Activated CD4-positive, alpha-beta memory T cell treated with anti-CD3 and anti-CD28 coated beads, Interleukin-2, amount 10 ng/mL, durations not matched to agents 7 days and 5 days (primary cell): ENCODE measurements at regions of chr19 and their contacts with region 1.

Region 1: DNA sequence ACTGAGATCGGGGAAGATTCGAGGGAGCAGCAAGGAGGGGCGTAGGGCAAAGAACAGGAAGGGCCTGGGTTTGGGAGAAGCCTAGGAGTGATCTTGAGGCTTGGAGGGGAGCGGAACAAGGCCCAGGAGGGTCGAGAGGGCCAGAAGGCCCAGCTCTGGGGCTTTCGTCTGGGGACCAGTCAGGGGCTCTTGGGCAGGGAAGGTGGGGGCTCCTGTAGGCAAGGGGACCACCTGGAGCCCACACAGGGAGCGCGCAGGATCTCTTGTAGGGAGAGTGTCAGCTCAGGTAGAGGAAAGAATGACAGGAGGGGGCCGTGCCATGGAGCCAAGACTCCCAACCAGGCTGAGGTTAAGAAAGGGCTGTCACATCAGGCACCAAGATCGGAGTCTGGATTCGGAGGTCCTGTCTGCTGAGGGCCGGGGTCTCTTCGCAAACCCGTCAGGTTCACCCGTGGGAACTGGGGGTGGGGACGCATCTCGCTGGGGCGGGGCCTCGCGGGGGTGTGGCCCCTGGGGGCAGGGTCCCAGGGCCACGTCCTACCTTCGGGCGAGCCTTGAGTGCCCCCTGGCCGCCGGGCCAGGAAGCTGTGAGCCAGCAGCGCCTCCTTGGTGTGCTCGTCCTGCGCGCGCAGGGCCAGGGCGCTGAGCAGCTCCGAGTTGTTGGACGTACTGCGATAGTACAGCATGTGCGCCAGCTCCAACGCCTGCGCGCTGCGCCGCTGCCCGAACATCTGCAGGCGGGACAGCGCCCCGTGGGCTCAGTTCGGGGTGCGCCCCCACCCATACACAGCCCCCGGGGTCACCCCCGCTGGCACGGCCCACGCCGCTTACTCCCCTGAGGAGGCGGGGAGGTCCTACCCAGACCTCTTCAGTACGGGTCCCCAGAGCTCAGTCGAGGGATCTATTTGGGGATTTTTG is 8.4 kb downstream of the EMP3 start:
- DNase-seq: peak; percentile 95
- H3K4me3 Mint-ChIP-seq: peak overlapping the region; percentile 96
- H3K27ac Mint-ChIP-seq: peak overlapping the region; percentile 95
- H3K4me1 Mint-ChIP-seq: peaks cover 53% of the 10 kb centered on the region
- H3K27me3 Mint-ChIP-seq: no peaks in the 10 kb centered on the region

Region 2: GRCh38 chr19:48255376-48256303 is 78.1 kb before region 1 on chr19 and contains the start of gene CARD8:
- CTCF ChIA-PET with region 1: interaction called, 25 read pairs
- POLR2A ChIA-PET with region 1: interaction called, 7 read pairs
- DNase-seq: peak; percentile 86
- H3K4me3 Mint-ChIP-seq: peak within 1 kb of the TSS; percentile 98
- H3K27ac Mint-ChIP-seq: peak within 1 kb of the TSS; percentile 95
- H3K4me1 Mint-ChIP-seq: peaks cover 68% of the 10 kb centered on the region
- H3K27me3 Mint-ChIP-seq: no peaks in the 10 kb centered on the region
- total RNA-seq, gene CARD8: 247 to 253 TPM

Region 3: GRCh38 chr19:48315712-48316111 is 18.0 kb before region 1 on chr19:
- CTCF ChIA-PET with region 1: interaction called, 342 read pairs
- POLR2A ChIA-PET with region 1: interaction called, 265 read pairs
- DNase-seq: no peak
- H3K4me3 Mint-ChIP-seq: no peak overlapping the region
- H3K27ac Mint-ChIP-seq: no peak overlapping the region
- H3K4me1 Mint-ChIP-seq: peaks cover 12% of the 10 kb centered on the region
- H3K27me3 Mint-ChIP-seq: no peaks in the 10 kb centered on the region

Region 4: DNA sequence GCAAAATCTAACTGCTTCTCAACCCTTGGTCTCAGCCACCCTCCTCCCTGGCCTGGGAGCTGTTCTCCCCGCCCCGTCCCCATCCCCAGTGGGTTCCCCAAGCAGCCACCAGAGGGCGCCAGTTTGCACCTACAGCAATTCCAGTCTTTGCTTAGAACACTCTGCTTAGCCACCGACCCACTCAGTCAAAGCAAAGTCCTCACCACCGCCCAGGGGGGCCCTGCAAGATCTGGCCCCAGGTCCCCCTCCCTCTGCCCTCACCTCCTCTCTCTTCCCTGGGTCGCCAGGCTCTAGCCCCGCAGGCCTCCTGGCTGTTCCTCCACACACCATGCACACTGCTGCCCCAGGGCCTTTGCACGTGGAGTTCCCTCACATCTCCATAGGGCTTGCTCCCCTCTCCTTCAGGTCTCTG is 17.6 kb after region 1 on chr19:
- CTCF ChIA-PET with region 1: interaction called, 19 read pairs
- POLR2A ChIA-PET with region 1: no interaction called
- DNase-seq: peak; percentile 86
- H3K4me3 Mint-ChIP-seq: no peak overlapping the region
- H3K27ac Mint-ChIP-seq: no peak overlapping the region
- H3K4me1 Mint-ChIP-seq: peaks cover 5% of the 10 kb centered on the region
- H3K27me3 Mint-ChIP-seq: no peaks in the 10 kb centered on the region

Region 5: DNA sequence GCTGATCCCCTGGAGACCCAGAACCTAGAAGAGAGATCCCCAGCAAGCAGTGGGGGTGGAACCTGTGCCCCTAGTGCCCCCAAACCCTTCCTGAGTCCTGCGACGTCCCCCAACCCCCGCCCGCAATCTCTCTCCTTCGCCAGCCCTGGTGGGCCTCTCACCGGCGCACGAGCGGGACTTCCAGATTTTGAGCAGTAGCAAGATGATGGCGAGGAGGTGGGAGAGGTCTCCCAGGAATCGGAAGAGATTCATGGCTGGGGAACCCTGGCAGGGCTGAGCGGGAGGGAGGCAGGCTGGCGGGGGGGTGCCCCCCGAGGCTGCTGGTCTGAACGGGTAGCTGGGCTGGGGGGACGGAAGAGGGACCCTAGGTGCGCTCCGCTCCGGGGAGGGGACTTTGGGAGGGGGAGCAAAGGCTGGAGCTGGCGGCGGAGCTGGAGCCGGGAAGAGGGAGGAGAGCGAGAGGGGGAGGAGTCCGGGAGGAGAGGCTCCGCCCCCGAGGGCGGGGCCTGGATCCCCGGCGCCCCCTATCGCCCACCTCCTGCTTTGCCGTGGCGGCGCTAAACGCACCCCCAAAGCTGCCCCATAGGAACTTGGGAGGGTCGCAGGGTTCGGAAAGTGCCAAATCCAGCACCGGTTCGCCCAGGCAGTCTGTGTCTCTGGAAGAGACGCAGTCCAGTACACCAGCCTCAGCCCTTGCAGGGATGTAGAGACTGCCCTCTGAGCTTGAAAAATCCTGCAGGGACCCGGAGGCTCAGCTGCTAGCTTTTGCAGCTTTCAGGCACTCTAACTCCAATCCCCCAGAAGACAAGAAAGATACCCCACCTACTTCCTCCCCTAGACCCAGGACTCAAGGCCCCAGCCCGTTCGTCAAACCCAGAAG is 57.6 kb after region 1 on chr19 and contains the start of gene KDELR1:
- CTCF ChIA-PET with region 1: interaction called, 20 read pairs
- POLR2A ChIA-PET with region 1: interaction called, 9 read pairs
- DNase-seq: peak; percentile 77
- H3K4me3 Mint-ChIP-seq: peak within 1 kb of the TSS; percentile 92
- H3K27ac Mint-ChIP-seq: peak within 1 kb of the TSS; percentile 88
- H3K4me1 Mint-ChIP-seq: peaks cover 28% of the 10 kb centered on the region
- H3K27me3 Mint-ChIP-seq: peaks cover 36% of the 10 kb centered on the region
- total RNA-seq, gene KDELR1: 91.8 to 94.4 TPM